PC-9 (cell line): ENCODE measurements at regions of chr6 and their contacts with region 1.

Region 1: DNA sequence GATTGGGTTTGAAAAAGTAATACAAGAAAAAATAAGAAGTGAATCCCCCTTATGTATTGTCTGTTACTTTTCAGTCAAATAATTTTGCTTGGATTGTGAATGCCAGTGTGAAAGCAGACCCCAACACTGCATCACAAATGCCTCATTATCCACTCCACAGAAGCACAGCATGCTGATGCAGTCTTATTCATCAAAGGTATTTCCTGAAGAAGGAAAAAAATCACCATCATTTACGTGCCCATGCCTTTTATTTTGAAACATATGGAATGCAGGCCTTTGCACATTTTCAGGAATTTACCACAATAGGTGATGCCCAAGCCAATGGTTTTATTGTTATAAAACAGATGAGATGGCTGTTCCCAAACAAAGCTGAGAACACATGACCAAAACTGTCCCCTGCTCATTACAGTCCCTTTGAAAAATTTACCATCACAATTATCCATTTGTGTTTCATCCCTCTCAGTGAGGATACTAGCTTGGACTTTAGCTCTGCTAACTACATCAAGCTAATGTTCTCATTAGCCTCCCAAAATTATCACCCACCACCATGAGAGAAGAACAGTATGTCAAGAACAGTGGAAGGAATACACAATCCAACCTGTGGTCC is 180.6 kb upstream of the HTR1E start:
- DNase-seq: no peak
- H3K4me3 ChIP-seq: no peak overlapping the region
- H3K27ac ChIP-seq: no peak overlapping the region
- H3K4me1 ChIP-seq: no peaks in the 10 kb centered on the region
- H3K27me3 ChIP-seq: no peaks in the 10 kb centered on the region
- CTCF ChIP-seq: no peak

Region 2: GRCh38 chr6:86706448-86706847 is 50.3 kb before region 1 on chr6:
- CTCF ChIA-PET with region 1: no interaction called
- POLR2A ChIA-PET with region 1: no interaction called
- intact Hi-C with region 1: loop called (anchors 1 kb)
- DNase-seq: no peak
- H3K4me3 ChIP-seq: no peak overlapping the region
- H3K27ac ChIP-seq: no peak overlapping the region
- H3K4me1 ChIP-seq: no peaks in the 10 kb centered on the region
- H3K27me3 ChIP-seq: no peaks in the 10 kb centered on the region
- CTCF ChIP-seq: no peak